AG04449 (cell line): ENCODE measurements at regions of chr6 and their contacts with region 1.

Region 1: DNA sequence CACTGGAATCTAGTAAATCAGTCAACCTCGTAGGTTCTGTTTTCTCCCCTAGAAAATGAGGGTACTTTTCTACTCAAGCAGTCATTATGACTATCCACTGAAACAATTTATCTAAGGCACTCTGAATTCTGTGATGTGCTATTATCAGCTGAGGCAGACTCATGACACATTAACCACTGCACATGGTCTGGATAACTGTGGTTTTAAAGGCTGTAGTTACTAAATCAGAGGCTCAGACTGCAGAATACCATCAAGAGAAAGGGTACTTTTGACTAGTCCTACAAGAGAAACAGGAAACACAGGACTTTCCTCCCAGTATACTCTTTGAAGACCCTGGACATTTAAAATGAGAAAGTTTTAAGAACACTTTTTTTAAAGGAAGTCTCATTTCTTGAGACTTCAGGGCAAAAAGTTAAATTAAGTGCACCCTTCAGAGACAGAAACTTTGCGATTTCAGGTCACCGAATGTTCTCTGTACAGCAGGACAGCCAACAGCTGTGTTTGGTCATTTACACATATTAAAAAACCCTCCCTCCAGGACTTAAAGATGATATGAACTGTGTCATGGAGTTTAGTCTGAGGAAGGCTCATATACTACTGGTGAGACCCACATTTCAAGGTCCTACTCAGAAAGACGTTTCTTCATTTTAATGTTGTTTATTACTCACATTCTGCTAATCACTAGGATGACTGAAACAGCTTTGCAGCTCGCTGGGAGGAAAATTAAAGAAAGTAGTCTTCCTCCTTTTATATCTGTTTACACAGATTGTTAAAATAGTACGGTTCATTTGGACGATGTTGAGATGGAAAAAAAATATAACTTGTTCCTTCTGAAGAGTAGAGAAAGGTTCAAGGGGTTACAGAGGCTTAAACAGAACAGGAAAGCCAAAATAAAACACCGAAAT is 19.9 kb downstream of the ATXN1 start:
- DNase-seq: peak; percentile 93
- H3K4me3 ChIP-seq: no peak overlapping the region; the same call in 1 of the 2 replicates
- CTCF ChIP-seq: no peak

Region 2: DNA sequence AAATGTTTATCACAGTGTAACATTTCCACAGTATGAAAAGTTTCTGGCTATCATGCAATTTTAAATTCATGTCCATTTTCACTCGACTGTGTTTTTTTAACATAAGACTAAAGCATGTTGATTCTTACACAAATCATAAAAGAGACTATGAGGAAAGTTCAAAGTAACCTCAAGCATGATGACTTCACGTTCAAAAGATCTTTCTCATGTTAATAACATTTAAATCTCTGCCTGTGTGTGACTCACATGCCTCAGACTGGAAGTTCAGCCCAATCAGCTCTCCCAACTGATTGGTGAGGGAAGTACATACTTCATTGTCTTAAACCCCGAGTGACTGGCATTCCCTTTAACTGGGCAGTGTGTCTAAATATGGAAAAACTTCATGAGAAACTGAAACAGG is 17.5 kb before region 1 on chr6:
- CTCF ChIA-PET with region 1: interaction called, 9 read pairs
- POLR2A ChIA-PET with region 1: interaction called, 21 read pairs
- DNase-seq: peak; percentile 96
- H3K4me3 ChIP-seq: no peak overlapping the region
- CTCF ChIP-seq: no peak